Dendritic cell treated with granulocyte-macrophage colony-stimulating factor and Interleukin-4, amounts not matched to agents 40 ng/mL and 50 ng/mL, for 4 days (primary cell): ENCODE measurements at regions of chr1 and their contacts with region 1.

Region 1: GRCh38 chr1:172002725-172003345 is 161.5 kb downstream of the DNM3 start:
- H3K4me3 Mint-ChIP-seq: no peak overlapping the region
- H3K27ac Mint-ChIP-seq: no peak overlapping the region
- H3K4me1 Mint-ChIP-seq: peaks cover 15% of the 10 kb centered on the region
- H3K27me3 Mint-ChIP-seq: no peaks in the 10 kb centered on the region

Region 2: GRCh38 chr1:172398970-172399755 is 396.3 kb after region 1 on chr1:
- intact Hi-C with region 1: loop called (anchors 1 kb)
- H3K4me3 Mint-ChIP-seq: no peak overlapping the region
- H3K27ac Mint-ChIP-seq: no peak overlapping the region
- H3K4me1 Mint-ChIP-seq: peaks cover 15% of the 10 kb centered on the region
- H3K27me3 Mint-ChIP-seq: no peaks in the 10 kb centered on the region

Region 3: GRCh38 chr1:172429331-172430127 is 426.7 kb after region 1 on chr1:
- intact Hi-C with region 1: loop called (anchors 5 kb)
- H3K4me3 Mint-ChIP-seq: no peak overlapping the region
- H3K27ac Mint-ChIP-seq: no peak overlapping the region
- H3K4me1 Mint-ChIP-seq: no peaks in the 10 kb centered on the region
- H3K27me3 Mint-ChIP-seq: no peaks in the 10 kb centered on the region

Region 4: DNA sequence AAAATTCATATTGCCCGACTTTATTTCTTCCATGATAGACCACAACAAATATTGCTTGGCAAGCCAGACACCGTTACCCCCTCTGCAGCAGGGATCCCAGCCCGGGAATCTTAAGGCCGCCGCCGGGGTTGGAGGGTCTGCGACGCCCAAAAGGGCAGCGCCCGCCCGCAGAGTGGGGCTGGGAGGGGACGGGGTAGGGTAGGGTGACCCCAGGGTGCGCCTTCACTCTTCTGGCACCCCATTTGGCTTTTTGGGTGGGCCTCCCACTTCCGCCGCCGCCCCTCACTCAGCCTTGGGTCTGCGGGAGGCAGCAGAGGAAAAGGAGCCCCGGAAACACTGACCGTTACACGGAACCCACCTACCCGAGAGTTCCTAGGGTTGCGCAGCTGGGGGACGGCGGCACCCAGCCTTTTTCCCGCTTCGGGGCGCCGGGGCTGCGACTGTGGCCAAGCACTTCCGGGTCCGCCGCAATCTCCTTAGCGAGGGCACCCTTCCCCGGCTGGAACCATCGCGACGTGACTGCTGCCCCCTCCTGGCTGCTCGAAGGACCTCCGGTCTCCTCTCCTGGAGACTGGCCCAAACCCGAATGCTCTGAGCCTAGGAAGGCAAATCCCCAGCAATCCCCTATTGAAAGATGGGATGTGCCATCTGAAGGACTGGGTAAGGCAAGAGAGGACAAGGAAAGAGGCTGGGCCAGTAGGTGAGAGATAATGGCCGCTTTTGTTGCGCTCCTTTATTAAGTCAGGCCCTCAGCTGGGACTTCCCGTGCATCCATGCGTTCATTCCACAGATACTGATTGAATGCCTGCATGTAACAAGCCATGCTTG is 441.0 kb after region 1 on chr1 and contains the start of gene PIGC:
- intact Hi-C with region 1: loop called (anchors 2 kb)
- H3K4me3 Mint-ChIP-seq: peak within 1 kb of the TSS; percentile 87
- H3K27ac Mint-ChIP-seq: peak within 1 kb of the TSS; percentile 95
- H3K4me1 Mint-ChIP-seq: peaks cover 40% of the 10 kb centered on the region
- H3K27me3 Mint-ChIP-seq: no peaks in the 10 kb centered on the region

Region 5: GRCh38 chr1:172719694-172720138 is 716.9 kb after region 1 on chr1:
- intact Hi-C with region 1: loop called (anchors 5 kb)
- H3K4me3 Mint-ChIP-seq: no peak overlapping the region
- H3K27ac Mint-ChIP-seq: no peak overlapping the region
- H3K4me1 Mint-ChIP-seq: peaks cover 11% of the 10 kb centered on the region
- H3K27me3 Mint-ChIP-seq: no peaks in the 10 kb centered on the region